Activated CD4-positive, alpha-beta T cell treated with anti-CD3 and anti-CD28 coated beads, Interleukin-2, amount 10 ng/mL, durations not matched to agents 24 days and 14 days (primary cell): ENCODE measurements at regions of chr3 and their contacts with region 1.

Region 1: DNA sequence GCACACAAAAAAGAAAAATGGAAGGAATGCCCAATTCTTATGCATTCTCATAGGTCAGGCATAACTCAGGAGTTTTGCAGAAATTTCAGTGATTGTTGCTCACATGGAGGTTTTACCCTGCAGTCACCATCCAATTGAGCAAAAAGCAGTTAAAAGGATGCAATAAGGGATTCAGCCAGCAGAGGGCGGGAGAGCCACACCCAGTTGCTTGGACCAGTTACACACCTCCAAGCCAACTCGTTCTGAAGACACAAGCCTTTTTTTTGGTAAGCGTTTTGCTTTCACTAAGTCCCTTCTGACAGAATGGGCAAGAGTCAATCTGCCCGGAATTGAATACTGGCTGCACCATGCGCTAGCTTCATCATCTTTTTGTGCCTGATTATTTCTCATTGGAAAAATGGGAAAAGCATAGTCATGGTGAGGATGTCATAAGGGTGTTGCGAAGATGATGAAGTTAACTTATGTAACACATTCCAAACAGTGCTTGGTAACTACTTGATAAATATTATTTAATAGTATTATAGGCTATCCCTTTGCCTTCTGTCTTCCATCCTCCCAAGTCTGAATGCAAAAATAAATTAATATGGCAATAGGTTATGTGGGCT is 154.4 kb upstream of the SGO1 start:
- DNase-seq: peak; percentile 89
- H3K4me3 Mint-ChIP-seq: no peak overlapping the region
- H3K27ac Mint-ChIP-seq: no peak overlapping the region
- H3K4me1 Mint-ChIP-seq: no peaks in the 10 kb centered on the region
- H3K27me3 Mint-ChIP-seq: peaks cover 2% of the 10 kb centered on the region

Region 2: DNA sequence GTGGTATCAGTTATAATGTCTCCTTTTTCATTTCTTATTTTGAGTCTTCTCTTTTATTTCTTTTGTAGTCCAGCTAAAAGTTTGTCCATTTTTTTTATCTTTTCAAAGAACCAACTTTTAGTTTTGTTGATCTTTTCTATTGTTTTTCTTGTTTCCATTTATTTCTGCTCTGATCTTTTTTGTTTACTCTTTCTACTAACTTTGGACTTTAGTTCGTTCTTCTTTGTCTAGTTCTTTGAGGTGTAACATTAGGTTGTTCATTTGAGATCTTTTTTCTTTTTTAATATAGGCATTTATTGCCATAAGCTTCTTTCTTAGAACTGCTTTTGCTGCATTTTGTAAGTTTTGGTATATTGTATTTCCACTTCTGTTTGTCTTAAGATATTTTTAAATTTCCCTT is 249.1 kb before region 1 on chr3:
- intact Hi-C with region 1: no loop called
- DNase-seq: no peak
- H3K4me3 Mint-ChIP-seq: no peak overlapping the region
- H3K27ac Mint-ChIP-seq: no peak overlapping the region
- H3K4me1 Mint-ChIP-seq: peaks cover 21% of the 10 kb centered on the region
- H3K27me3 Mint-ChIP-seq: no peaks in the 10 kb centered on the region

Region 3: DNA sequence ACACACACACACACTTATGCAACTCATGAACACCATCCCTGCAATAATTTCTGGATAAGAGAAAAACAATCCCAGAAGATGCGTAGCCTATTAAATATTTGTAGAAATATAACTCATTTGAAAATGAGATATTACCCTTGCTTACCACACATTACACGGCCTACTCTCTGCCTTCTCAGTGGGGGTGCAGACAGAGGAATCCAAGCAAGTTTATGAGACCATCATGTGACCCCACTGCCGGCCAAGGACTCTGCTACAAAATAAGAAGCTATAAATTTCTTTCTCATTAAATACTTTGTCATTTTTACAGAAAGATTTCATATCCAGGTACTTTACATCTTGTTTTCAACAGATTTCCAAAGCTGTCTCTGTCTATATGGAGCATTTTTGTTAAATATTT is 1124.3 kb after region 1 on chr3:
- intact Hi-C with region 1: no loop called
- DNase-seq: no peak
- H3K4me3 Mint-ChIP-seq: no peak overlapping the region
- H3K27ac Mint-ChIP-seq: no peak overlapping the region
- H3K4me1 Mint-ChIP-seq: no peaks in the 10 kb centered on the region
- H3K27me3 Mint-ChIP-seq: no peaks in the 10 kb centered on the region

Region 4: DNA sequence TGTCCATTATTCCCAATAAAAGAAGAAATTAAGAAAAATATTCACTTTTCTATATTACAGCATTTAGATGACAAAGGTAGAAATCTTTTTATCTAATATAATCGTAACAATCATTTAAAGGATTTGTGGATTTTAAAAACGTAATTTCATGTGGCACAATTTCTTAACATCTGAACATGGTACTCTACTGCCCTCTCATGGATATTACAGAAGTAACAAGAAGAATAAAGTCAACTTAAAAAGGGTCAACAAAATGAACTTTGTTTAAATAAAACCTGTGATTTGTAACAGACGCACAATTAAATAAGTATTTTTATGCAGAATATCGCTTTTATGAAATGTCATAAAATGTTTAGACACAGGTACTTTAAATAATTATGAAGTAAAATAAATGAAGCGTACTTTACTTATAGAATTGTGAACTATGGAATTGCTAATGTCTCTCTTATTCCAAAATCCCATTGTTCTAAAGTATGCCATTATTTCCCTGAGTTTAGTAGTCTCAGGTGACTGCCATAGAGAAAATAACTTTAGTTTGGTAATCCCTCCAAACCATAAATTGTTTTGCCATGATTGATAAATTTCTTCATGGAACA is 1777.4 kb after region 1 on chr3:
- intact Hi-C with region 1: loop called (anchors 5 kb)
- DNase-seq: no peak
- H3K4me3 Mint-ChIP-seq: no peak overlapping the region
- H3K27ac Mint-ChIP-seq: no peak overlapping the region
- H3K4me1 Mint-ChIP-seq: no peaks in the 10 kb centered on the region
- H3K27me3 Mint-ChIP-seq: no peaks in the 10 kb centered on the region